ENCODE measurements at regions of chr1 and their contacts with region 1.

Region 1: GRCh38 chr1:225766967-225767633 is 10.5 kb upstream of the SRP9 start:
- DNase-seq: peak; percentile 74 to 81 (median 77)
- ATAC-seq: peak; percentile 47 to 77
- H3K4me3 ChIP-seq: no peak overlapping the region
- H3K27ac ChIP-seq: peak overlapping the region; percentile 93
- H3K4me1 ChIP-seq: peaks cover 22% of the 10 kb centered on the region
- H3K27me3 ChIP-seq: no peaks in the 10 kb centered on the region

Region 2: GRCh38 chr1:225554216-225554812 is 212.8 kb before region 1 on chr1:
- intact Hi-C with region 1: loop called in 3 of 4 experiments (anchors 10 kb)
- DNase-seq: no peak
- ATAC-seq: no peak
- H3K4me3 ChIP-seq: no peak overlapping the region
- H3K27ac ChIP-seq: no peak overlapping the region
- H3K4me1 ChIP-seq: no peaks in the 10 kb centered on the region
- H3K27me3 ChIP-seq: no peaks in the 10 kb centered on the region

Region 3: GRCh38 chr1:225710804-225711203 is 56.3 kb before region 1 on chr1:
- intact Hi-C with region 1: no loop called
- DNase-seq: no peak
- ATAC-seq: no peak
- H3K4me3 ChIP-seq: no peak overlapping the region
- H3K27ac ChIP-seq: no peak overlapping the region
- H3K4me1 ChIP-seq: no peaks in the 10 kb centered on the region
- H3K27me3 ChIP-seq: no peaks in the 10 kb centered on the region

Region 4: DNA sequence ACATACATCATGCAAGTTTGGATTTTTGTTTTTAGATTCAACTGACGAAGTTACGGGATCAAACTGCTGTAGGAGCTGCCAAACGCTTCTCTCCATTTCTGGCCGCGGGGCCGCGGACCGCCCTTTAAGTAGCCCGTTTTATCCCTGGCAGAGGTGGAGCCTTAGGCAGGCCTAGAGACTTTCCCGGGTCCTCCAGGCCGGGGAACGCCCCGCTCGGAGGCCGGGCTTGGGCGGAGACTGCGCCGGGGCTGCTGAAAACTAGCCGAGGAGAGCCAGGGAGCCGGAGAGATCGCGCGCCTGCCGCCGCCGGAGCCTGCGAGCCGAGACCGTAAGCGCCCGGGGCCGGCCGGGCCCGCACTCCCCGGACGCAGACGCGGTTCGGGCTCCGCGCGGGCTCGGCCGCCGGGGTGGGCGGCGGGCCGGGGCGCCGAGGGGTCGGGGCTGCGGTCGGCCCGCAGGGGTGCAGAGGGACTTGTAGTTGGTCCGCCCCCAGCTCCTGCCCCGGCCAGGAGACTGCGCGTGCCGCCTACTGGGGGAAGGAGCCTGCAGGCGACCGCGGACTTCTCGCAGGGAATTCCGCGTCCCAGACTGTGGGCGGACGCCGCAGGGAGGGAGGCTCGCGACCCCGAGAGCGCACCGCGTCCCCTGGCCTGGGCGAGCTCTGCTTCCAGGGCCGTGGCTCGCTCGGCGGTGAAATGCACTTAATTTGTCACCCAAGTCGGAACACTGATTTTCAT is 42.9 kb after region 1 on chr1 and contains the start of gene EPHX1:
- intact Hi-C with region 1: no loop called
- DNase-seq: peak; percentile 93 to 97 (median 97)
- ATAC-seq: peak; percentile 87 to 91
- H3K4me3 ChIP-seq: peak within 1 kb of the TSS; percentile 87
- H3K27ac ChIP-seq: peak within 1 kb of the TSS; percentile 33
- H3K4me1 ChIP-seq: peaks cover 17% of the 10 kb centered on the region
- H3K27me3 ChIP-seq: no peaks in the 10 kb centered on the region
- total RNA-seq, gene EPHX1: 47.3 to 65.0 (median 56.8) TPM

Region 5: GRCh38 chr1:226051356-226051755 is 284.3 kb after region 1 on chr1:
- intact Hi-C with region 1: no loop called
- DNase-seq: no peak
- ATAC-seq: no peak
- H3K4me3 ChIP-seq: no peak overlapping the region
- H3K27ac ChIP-seq: no peak overlapping the region
- H3K4me1 ChIP-seq: no peaks in the 10 kb centered on the region
- H3K27me3 ChIP-seq: no peaks in the 10 kb centered on the region

Region 6: GRCh38 chr1:226144045-226144444 is 376.9 kb after region 1 on chr1:
- intact Hi-C with region 1: no loop called
- DNase-seq: peak in 1 of 3 donors; percentile 12
- ATAC-seq: no peak
- H3K4me3 ChIP-seq: no peak overlapping the region
- H3K27ac ChIP-seq: no peak overlapping the region
- H3K4me1 ChIP-seq: no peaks in the 10 kb centered on the region
- H3K27me3 ChIP-seq: no peaks in the 10 kb centered on the region

Measured in right cardiac atrium (tissue), 5 donors.